Panc1 (cell line): ENCODE measurements at regions of chr10 and their contacts with region 1.

Region 1: DNA sequence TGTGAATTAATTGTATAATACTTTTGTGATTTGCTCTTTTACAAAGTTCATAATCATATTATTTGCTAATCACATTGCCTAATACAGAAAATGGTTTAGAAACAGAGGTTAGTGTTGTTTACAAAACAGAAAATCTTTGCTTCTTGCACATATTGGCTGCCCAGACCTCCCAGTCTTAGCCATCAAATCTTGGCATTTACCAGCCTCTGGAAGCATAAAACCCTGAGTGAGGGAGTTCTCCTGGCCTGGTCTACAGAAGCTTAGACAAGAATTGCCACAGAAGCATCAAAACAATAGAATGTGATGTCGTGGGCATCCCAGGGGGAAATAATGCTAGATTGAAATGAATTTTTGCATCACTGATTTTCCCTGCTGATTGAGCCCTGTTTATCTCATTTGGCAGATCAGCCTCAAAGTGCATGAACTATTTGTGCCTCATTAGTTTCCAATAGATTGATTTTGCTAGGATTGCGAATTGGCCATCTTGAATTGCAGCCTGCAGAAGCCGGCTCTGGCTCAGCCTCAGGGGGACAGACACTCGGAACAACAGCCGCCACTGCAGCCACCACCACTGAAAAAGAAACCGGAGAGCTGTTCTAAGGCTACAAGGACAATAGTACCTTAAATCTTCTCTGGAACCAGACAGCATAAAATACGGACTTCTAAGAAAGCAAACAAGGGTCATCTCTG is 11.1 kb upstream of the SORBS1 start:
- DNase-seq: no peak
- ATAC-seq: no peak
- H3K4me3 ChIP-seq: no peak overlapping the region
- H3K27ac ChIP-seq: no peak overlapping the region
- H3K4me1 ChIP-seq: no peaks in the 10 kb centered on the region
- H3K27me3 ChIP-seq: no peaks in the 10 kb centered on the region
- CTCF ChIP-seq: no peak

Region 2: GRCh38 chr10:94183666-94184264 is 1388.5 kb before region 1 on chr10:
- CTCF ChIA-PET with region 1: no interaction called
- POLR2A ChIA-PET with region 1: no interaction called
- in situ Hi-C with region 1: no loop called
- intact Hi-C with region 1: no loop called
- DNase-seq: no peak
- ATAC-seq: no peak
- H3K4me3 ChIP-seq: no peak overlapping the region
- H3K27ac ChIP-seq: no peak overlapping the region
- H3K4me1 ChIP-seq: no peaks in the 10 kb centered on the region
- H3K27me3 ChIP-seq: no peaks in the 10 kb centered on the region
- CTCF ChIP-seq: no peak

Region 3: GRCh38 chr10:95374597-95375209 is 197.6 kb before region 1 on chr10:
- CTCF ChIA-PET with region 1: no interaction called
- POLR2A ChIA-PET with region 1: no interaction called
- in situ Hi-C with region 1: no loop called
- intact Hi-C with region 1: no loop called
- DNase-seq: peak; percentile 43
- ATAC-seq: peak; percentile 100
- H3K4me3 ChIP-seq: no peak overlapping the region
- H3K27ac ChIP-seq: no peak overlapping the region
- H3K4me1 ChIP-seq: 0 out of 2 replicates have a peak, but pooled peaks cover 2% of the 10 kb centered on the region
- H3K27me3 ChIP-seq: peaks cover 2% of the 10 kb centered on the region; the same call in 1 of the 2 replicates
- CTCF ChIP-seq: peak; percentile 97

Region 4: GRCh38 chr10:95415631-95416031 is 156.6 kb before region 1 on chr10:
- CTCF ChIA-PET with region 1: no interaction called
- POLR2A ChIA-PET with region 1: interaction called, 20 read pairs
- in situ Hi-C with region 1: no loop called
- intact Hi-C with region 1: no loop called
- DNase-seq: no peak
- ATAC-seq: peak; percentile 14; the same call in 1 of the 2 replicates
- H3K4me3 ChIP-seq: no peak overlapping the region
- H3K27ac ChIP-seq: no peak overlapping the region
- H3K4me1 ChIP-seq: no peaks in the 10 kb centered on the region
- H3K27me3 ChIP-seq: no peaks in the 10 kb centered on the region
- CTCF ChIP-seq: no peak